ENCODE measurements at regions of chr18 and their contacts with region 1.

Region 1: DNA sequence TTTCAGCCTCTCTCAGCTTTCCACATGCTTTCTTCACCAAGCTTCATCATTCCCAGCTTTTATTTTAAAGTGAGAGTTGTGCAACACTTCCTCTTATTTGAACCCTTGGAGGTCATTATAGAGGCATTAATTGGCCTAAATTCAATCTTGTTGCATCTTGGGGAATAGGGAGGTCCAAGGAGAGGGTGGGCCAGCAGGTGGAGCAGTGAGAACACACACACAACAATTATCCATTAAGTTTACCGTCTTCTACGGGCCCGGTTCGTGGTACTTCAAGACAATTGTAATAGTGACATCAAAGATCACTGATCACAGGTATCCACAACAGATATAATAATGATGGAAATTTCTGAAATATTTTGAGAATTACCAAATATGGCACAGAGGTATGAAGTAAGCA is 457.2 kb upstream of the SMIM21 start:
- DNase-seq: no peak
- H3K4me3 Mint-ChIP-seq: no peak overlapping the region
- H3K27ac Mint-ChIP-seq: no peak overlapping the region
- H3K4me1 Mint-ChIP-seq: no peaks in the 10 kb centered on the region
- H3K27me3 Mint-ChIP-seq: peaks cover 18% of the 10 kb centered on the region

Region 2: DNA sequence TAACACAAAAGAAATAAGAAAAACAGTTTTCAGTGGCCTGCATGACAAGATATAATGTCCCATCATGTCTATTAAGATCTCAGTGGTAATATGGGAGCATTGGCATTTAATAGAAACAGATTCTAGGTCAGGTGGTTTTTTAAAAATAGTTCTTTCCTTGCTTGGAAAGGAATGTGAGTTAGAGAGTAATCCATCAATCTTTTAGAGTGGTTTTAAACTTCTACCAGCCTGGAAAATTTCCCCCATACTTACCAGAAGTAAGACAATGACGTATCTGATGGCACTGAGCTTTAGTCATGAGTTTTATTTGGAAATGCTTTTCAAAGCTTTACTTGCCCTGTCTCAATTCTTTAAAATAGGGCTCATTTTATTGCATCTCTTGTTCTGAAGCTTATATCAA is 15.6 kb before region 1 on chr18:
- CTCF ChIA-PET with region 1: no interaction called
- intact Hi-C with region 1: no loop called
- DNase-seq: no peak
- H3K4me3 Mint-ChIP-seq: no peak overlapping the region
- H3K27ac Mint-ChIP-seq: no peak overlapping the region
- H3K4me1 Mint-ChIP-seq: no peaks in the 10 kb centered on the region
- H3K27me3 Mint-ChIP-seq: peaks cover 8% of the 10 kb centered on the region

Region 3: DNA sequence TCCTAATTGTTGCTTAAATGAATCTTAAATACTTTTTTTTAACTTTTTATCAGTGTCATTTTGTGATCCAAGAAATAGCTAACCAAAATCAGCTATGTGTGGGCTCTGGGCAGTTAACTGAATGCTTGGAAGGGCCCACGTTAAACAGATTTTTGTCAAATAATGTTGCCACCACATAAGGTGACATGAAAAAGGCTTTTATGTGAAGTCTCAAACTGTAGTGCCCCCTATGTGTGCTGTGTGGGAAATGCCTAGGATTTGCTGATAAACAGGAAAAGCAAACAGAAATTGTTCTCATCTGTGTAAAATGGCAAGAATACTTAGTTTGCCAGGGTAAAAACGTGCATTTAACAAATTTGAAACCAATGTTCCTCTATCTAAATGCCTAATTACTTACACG is 368.2 kb after region 1 on chr18:
- CTCF ChIA-PET with region 1: no interaction called
- intact Hi-C with region 1: loop called (anchors 2 kb)
- DNase-seq: peak; percentile 26
- H3K4me3 Mint-ChIP-seq: no peak overlapping the region
- H3K27ac Mint-ChIP-seq: no peak overlapping the region
- H3K4me1 Mint-ChIP-seq: no peaks in the 10 kb centered on the region
- H3K27me3 Mint-ChIP-seq: peaks cover 10% of the 10 kb centered on the region

Region 4: DNA sequence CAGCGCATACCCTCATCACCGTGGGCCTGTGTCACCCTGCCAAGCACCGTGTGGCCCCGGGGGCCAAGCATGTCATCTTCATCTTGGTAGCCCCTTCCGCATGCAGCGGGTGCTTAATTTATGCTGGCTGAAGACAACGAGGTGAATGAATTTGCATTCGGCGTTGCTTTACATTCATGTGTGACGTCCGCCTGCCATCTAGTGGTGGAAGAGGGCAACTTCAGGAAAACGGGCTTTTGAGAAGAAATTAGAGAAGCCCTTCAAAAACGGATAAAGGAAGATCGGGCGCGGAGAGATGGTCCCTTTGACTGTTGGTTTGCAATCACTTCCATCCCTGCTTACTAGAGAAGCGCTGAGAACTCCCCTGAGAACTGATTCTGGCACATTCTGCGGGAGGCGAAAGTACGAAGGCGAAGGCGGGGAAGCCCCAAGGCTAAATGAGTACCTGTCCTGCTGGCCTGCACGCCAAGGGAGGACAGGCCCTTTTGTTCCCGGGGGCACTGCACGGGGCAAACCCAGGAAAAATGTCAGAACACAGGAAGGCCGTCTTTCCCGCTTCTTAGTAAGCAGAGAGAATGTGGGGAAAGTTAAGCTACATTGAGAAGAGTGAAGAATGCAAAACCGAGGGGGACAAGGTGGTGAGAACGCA is 464.5 kb after region 1 on chr18:
- CTCF ChIA-PET with region 1: interaction called, 3 read pairs
- intact Hi-C with region 1: loop called (anchors 5 kb)
- DNase-seq: peak; percentile 80
- H3K4me3 Mint-ChIP-seq: no peak overlapping the region
- H3K27ac Mint-ChIP-seq: no peak overlapping the region
- H3K4me1 Mint-ChIP-seq: peaks cover 9% of the 10 kb centered on the region
- H3K27me3 Mint-ChIP-seq: peaks cover 7% of the 10 kb centered on the region

Measured in activated naive CD4-positive, alpha-beta T cell treated with anti-CD3 and anti-CD28 coated beads for 36 hours (primary cell).